ENCODE measurements at regions of chr11 and their contacts with region 1.

Region 1: DNA sequence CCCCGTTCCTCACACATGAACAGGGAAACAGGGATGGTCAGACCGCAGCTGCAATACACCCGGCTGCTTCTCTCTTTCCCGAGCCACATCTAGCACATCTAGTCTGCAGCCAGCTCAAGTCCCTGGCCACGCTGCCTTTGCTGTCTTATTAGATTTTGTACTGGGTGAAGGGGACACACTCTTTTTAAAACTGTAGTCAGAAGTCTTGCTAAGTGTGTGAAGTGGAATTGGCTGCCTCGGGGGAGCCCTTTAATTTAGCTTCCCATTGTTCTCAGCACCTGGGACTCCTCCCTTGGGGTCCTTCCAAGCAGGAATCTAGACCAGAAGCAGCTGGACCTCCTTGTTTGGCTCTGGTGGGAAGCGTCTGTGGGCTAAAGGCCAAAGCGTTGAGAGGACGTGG is 420.0 kb downstream of the CTTN start:
- DNase-seq: no peak
- H3K4me3 ChIP-seq: no peak overlapping the region
- H3K27ac ChIP-seq: no peak overlapping the region
- H3K4me1 ChIP-seq: no peaks in the 10 kb centered on the region
- H3K27me3 ChIP-seq: no peaks in the 10 kb centered on the region
- CTCF ChIP-seq: no peak
- EP300 ChIP-seq: no peak
- POLR2A ChIP-seq: no peak

Region 2: DNA sequence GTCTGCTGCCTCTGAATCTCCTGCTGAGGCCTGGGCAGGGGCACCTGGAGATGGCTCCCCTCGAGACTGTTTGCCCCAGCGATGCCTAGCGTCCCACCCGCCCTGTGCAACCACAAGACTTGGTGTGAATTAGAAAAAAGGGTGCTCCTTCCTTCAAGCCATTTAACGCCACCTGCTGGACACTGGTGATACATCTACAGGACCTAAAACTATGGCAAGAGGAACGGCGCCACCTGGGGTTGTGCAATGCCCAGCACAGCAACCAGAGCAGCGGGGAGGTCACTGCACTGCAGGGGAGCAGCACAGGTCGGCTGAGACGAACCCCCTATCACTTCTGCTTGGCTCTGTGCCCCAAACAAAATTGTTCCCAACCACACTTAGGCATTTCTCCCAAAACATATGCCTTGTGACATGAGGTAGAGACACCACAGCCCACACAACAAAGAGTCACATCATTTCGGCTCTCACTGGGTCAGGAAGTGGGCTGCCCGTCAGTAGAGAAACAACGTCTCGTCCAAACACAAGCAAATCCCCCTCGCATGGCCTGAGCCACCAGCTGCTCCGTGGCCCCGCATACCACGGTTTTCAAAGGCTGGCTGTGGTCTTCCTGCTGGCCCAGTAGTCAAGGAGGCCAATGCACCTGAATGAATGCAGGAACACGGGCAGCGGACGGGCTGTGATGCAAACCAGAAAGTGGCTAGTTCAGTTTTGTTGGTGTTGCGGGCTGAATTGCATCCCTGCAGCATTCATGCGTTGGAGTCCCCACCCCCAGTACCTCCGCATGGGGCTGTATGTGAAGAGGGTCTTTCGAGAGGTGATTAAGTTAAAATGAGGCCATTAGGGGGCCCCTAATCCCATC is 262.1 kb after region 1 on chr11:
- in situ Hi-C with region 1: no loop called
- intact Hi-C with region 1: loop called (anchors 5 kb)
- DNase-seq: peak; percentile 62
- H3K4me3 ChIP-seq: no peak overlapping the region
- H3K27ac ChIP-seq: no peak overlapping the region
- H3K4me1 ChIP-seq: no peaks in the 10 kb centered on the region
- H3K27me3 ChIP-seq: no peaks in the 10 kb centered on the region
- CTCF ChIP-seq: peak; percentile 43 to 67 (median 61)
- EP300 ChIP-seq: no peak
- POLR2A ChIP-seq: no peak

Measured in transverse colon (tissue), 4 donors.